ENCODE measurements at regions of chr20 and their contacts with region 1.

Region 1: GRCh38 chr20:37990571-37991151 is 42.6 kb downstream of the TTI1 start:
- DNase-seq: peak in 9 of 14 experiments; percentile 6 to 77 (median 21)
- ATAC-seq: peak; percentile 70
- H3K4me3 ChIP-seq: no peak overlapping the region
- H3K4me3 Mint-ChIP-seq: no peak overlapping the region
- H3K27ac ChIP-seq: no peak overlapping the region
- H3K27ac Mint-ChIP-seq: peak overlapping the region; percentile 68
- H3K4me1 ChIP-seq: peaks cover 13% of the 10 kb centered on the region
- H3K4me1 Mint-ChIP-seq: peaks cover 24% of the 10 kb centered on the region
- H3K27me3 ChIP-seq: no peaks in the 10 kb centered on the region
- H3K27me3 Mint-ChIP-seq: no peaks in the 10 kb centered on the region
- CTCF ChIP-seq: no peak

Region 2: DNA sequence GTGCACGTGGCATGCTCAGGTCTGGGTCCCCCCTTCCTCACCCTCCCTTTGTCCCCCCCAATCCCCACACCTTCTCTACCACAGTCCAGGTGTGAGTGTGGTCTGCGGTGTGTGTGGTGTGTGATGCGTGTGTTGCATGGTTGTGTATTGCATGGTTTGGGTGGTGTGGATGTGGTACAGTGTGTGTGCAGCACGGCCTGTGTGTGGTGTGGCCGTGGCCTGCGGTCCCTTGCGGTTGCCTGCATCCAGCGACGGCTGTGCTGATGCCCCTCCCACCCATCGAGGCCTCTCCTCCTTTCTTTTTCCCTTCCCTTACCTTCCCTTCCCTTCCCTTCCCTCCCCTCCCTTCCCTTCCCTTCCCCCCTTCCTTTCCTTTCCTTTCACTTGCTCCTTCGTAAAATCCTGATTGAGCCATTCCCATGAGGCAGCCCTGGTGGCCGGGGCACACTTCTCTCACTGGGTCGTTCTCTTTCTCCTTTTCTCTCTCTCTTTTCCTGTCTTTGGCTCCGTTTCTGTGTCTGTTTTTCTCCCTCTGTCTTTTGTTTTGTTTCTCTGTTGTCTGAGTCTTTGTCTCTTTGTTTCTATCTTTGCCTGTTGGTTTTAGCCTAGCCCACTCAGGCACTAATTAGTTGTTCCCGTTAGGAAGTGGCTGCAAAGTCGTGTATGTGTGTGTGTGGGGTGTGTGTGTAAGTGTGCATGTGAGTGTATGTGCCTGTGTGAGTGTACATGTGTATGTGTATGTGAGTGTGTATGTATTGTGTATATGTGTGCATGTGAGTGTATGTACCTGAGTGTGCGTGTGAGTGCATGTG is 579.0 kb before region 1 on chr20:
- CTCF ChIA-PET with region 1: no interaction called
- POLR2A ChIA-PET with region 1: no interaction called
- intact Hi-C with region 1: no loop called
- DNase-seq: peak in 1 of 14 experiments; percentile 3
- ATAC-seq: peak; percentile 11
- H3K4me3 ChIP-seq: peak overlapping the region; percentile 46
- H3K4me3 Mint-ChIP-seq: no peak overlapping the region
- H3K27ac ChIP-seq: no peak overlapping the region
- H3K27ac Mint-ChIP-seq: no peak overlapping the region
- H3K4me1 ChIP-seq: peaks cover 20% of the 10 kb centered on the region
- H3K4me1 Mint-ChIP-seq: peaks cover 16% of the 10 kb centered on the region
- H3K27me3 ChIP-seq: peaks cover 4 to 9% of the 10 kb centered on the region in 2 experiments
- H3K27me3 Mint-ChIP-seq: peaks cover 38% of the 10 kb centered on the region
- CTCF ChIP-seq: no peak

Region 3: GRCh38 chr20:37564388-37565133 is 426.1 kb before region 1 on chr20:
- CTCF ChIA-PET with region 1: no interaction called
- POLR2A ChIA-PET with region 1: no interaction called
- intact Hi-C with region 1: loop called in 1 of 2 experiments (anchors 2 kb)
- DNase-seq: peak in 13 of 14 experiments; percentile 3 to 64 (median 23)
- ATAC-seq: no peak
- H3K4me3 ChIP-seq: no peak overlapping the region
- H3K4me3 Mint-ChIP-seq: no peak overlapping the region
- H3K27ac ChIP-seq: no peak overlapping the region
- H3K27ac Mint-ChIP-seq: no peak overlapping the region
- H3K4me1 ChIP-seq: peaks cover 7% of the 10 kb centered on the region
- H3K4me1 Mint-ChIP-seq: peaks cover 4% of the 10 kb centered on the region
- H3K27me3 ChIP-seq: peaks cover 33 to 49% of the 10 kb centered on the region in 2 experiments
- H3K27me3 Mint-ChIP-seq: peaks cover 73% of the 10 kb centered on the region
- CTCF ChIP-seq: peak; percentile 71

Region 4: DNA sequence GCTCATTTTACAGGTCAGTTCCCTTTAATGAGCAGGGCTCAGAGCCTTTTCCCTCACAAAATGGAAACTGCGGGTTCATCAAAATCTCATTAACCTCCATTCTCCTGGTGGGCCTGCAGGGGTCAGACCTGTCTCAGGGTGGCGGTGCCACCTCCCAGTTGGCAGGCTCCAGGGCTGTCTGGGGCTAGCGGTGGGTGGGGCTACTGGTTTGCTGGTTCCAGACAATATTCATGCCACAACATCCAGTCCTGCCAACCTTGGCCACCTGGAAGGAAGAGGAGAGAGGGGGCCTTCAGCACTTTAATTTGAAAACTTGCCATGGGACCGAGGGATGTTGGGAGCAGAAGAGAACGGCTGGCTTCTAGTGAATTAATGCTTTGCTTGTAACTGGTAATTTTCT is 338.7 kb before region 1 on chr20:
- CTCF ChIA-PET with region 1: no interaction called
- POLR2A ChIA-PET with region 1: no interaction called
- intact Hi-C with region 1: loop called (anchors 2 kb)
- DNase-seq: peak in 5 of 14 experiments; percentile 4 to 29 (median 16)
- ATAC-seq: peak; percentile 34
- H3K4me3 ChIP-seq: no peak overlapping the region
- H3K4me3 Mint-ChIP-seq: no peak overlapping the region
- H3K27ac ChIP-seq: no peak overlapping the region
- H3K27ac Mint-ChIP-seq: no peak overlapping the region
- H3K4me1 ChIP-seq: no peaks in the 10 kb centered on the region
- H3K4me1 Mint-ChIP-seq: no peaks in the 10 kb centered on the region
- H3K27me3 ChIP-seq: peaks cover 0 to 6% of the 10 kb centered on the region in 2 experiments
- H3K27me3 Mint-ChIP-seq: peaks cover 25% of the 10 kb centered on the region
- CTCF ChIP-seq: no peak

Region 5: DNA sequence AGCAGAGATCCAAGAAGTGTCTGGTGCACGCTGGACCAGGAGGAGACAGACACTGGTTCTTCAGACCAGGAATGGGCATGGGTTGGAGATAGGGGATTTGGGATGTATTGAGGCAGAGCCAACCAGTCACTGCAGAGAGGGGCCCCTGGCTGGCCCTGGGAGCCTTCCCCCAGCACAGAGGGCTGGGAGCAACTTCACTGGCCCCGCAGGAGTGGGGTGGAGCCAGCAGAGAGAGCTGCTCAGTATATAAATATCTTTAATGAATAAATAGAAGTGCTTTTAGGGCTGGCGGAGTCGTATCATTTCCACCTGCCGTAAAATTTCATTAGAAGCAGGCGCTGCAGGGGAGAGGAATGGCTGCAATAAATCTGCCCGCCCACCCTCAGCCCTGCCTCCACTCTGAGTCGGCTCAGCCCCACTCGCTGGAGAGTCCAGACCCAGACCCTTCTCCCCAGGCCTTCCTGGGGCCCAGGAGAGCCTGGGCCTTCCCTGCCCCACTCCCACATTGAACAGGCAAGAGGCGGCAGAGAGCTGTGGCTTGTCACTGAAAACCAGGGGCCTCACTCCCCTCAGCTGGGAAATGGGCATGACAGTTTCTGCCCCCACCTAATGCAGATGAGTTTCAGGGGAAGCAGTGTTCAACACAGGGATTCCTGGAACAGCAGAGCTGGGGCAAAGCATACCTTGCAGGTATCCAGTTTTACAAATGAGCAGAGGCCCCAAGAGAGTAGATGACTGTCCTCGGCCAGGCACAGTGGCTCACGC is 111.6 kb before region 1 on chr20:
- CTCF ChIA-PET with region 1: no interaction called
- POLR2A ChIA-PET with region 1: no interaction called
- intact Hi-C with region 1: no loop called
- DNase-seq: no peak
- ATAC-seq: no peak
- H3K4me3 ChIP-seq: no peak overlapping the region
- H3K4me3 Mint-ChIP-seq: no peak overlapping the region
- H3K27ac ChIP-seq: no peak overlapping the region
- H3K27ac Mint-ChIP-seq: no peak overlapping the region
- H3K4me1 ChIP-seq: no peaks in the 10 kb centered on the region
- H3K4me1 Mint-ChIP-seq: no peaks in the 10 kb centered on the region
- H3K27me3 ChIP-seq: no peaks in the 10 kb centered on the region
- H3K27me3 Mint-ChIP-seq: no peaks in the 10 kb centered on the region
- CTCF ChIP-seq: no peak

Region 6: DNA sequence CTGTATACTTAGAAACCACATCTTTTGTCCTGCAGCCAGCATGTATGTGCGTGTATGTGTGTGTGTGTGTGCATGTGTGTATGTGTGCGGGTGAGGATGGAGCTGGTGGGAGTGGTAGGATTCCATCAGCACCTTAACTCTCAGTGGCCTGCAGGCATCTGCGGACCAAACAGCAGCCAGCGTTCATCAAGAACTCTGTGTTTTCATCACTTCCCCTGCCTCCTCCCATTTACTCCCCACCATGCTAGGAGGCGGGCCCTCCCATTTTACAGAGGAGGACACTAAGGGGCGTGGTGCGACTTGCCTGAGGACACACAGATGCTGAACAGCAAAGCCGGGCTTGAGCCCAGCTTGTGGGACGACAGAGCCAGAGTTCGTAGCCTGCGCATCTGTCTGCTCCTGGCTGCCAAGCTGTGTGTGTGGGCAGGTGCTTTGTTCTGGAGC is 78.8 kb before region 1 on chr20:
- CTCF ChIA-PET with region 1: no interaction called
- POLR2A ChIA-PET with region 1: no interaction called
- intact Hi-C with region 1: loop called in 1 of 2 experiments (anchors 5 kb)
- DNase-seq: no peak
- ATAC-seq: no peak
- H3K4me3 ChIP-seq: no peak overlapping the region
- H3K4me3 Mint-ChIP-seq: no peak overlapping the region
- H3K27ac ChIP-seq: no peak overlapping the region
- H3K27ac Mint-ChIP-seq: no peak overlapping the region
- H3K4me1 ChIP-seq: peaks cover 11% of the 10 kb centered on the region
- H3K4me1 Mint-ChIP-seq: peaks cover 21% of the 10 kb centered on the region
- H3K27me3 ChIP-seq: peaks cover 9 to 23% of the 10 kb centered on the region in 2 experiments
- H3K27me3 Mint-ChIP-seq: peaks cover 62% of the 10 kb centered on the region
- CTCF ChIP-seq: no peak

Region 7: GRCh38 chr20:38210741-38211140 is 220.1 kb after region 1 on chr20:
- CTCF ChIA-PET with region 1: no interaction called
- POLR2A ChIA-PET with region 1: no interaction called
- intact Hi-C with region 1: no loop called
- DNase-seq: peak in 1 of 14 experiments; percentile 26
- ATAC-seq: no peak
- H3K4me3 ChIP-seq: no peak overlapping the region
- H3K4me3 Mint-ChIP-seq: no peak overlapping the region
- H3K27ac ChIP-seq: no peak overlapping the region
- H3K27ac Mint-ChIP-seq: no peak overlapping the region
- H3K4me1 ChIP-seq: no peaks in the 10 kb centered on the region
- H3K4me1 Mint-ChIP-seq: no peaks in the 10 kb centered on the region
- H3K27me3 ChIP-seq: peaks cover 2 to 6% of the 10 kb centered on the region in 2 experiments
- H3K27me3 Mint-ChIP-seq: peaks cover 16% of the 10 kb centered on the region
- CTCF ChIP-seq: no peak